ENCODE measurements at regions of chr18 and their contacts with region 1.

Region 1: DNA sequence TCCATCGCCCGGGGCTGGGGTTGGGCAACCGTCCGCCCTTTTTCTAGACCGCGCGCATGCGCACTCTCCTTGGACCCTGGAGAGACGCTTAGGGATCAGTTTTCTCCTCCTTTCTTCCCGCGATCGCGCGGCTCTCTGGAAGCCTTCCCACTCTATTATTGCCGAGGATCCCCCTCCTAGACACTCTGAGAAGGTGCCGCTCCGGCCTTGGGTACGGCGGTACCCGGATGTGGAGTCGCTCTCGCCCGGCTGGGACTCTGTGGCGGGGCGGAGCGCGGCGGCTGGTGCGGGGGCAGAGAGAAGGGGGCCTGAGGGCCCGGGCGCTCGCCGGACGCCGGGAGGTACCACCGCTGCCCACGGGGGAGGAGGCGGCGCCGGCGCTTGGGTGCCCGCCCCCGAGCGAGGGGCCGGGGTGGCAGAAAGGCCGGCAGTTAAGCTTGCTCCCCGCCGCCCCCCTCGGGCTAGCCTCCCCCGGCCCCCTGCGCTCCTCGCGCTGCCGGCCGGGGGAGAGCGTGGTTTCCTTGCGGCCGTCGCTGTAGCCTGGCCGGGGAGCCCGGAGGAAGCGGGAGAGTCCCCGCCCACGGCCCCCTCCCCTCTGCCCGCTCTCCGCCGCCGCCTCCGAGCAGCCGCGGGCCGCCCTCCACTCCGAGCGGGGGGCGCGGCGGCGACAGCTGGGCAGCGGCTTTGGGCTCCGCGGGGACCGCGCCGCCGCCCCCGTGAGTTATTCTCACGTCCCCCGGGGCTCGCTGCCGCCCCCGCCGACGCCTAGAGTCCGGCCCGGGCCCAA is at the start of gene MIB1:
- DNase-seq: peak in 1 of 2 experiments; percentile 18
- ATAC-seq: peak; percentile 91
- H3K4me3 ChIP-seq: peak within 1 kb of the TSS; percentile 92
- H3K27ac ChIP-seq: peak within 1 kb of the TSS; percentile 94 to 100
- H3K4me1 ChIP-seq: peaks cover 8% of the 10 kb centered on the region; the same call in 2 of the 3 replicates
- CTCF ChIP-seq: no peak
- EP300 ChIP-seq: no peak
- POLR2A ChIP-seq: peak; percentile 47
- RAD21 ChIP-seq: no peak
- polyA plus RNA-seq, gene MIB1: 20.3 and 22.2 TPM in 2 replicates

Region 2: DNA sequence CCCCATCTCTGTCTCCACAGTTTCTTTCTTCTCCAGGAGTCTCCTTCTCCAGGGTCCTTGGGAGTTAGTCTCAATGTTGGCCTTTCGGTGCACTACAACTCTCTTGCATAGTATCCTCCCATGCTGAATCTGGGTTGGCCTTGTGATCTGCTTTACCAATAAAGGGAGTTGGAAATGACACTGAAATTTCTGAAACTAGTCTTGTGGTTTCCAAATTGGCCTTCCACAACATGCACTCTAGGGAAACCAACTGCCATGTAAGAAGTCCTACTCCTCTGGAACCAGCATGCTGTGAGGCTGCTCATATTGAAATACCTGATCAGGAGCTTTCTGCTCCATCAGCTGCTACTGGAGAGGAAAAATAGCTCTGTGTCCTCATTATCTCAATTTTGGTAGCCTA is 26.4 kb before region 1 on chr18:
- CTCF ChIA-PET with region 1: no interaction called
- POLR2A ChIA-PET with region 1: interaction called, 10 read pairs
- DNase-seq: no peak
- ATAC-seq: no peak
- H3K4me3 ChIP-seq: no peak overlapping the region
- H3K27ac ChIP-seq: no peak overlapping the region
- H3K4me1 ChIP-seq: no peaks in the 10 kb centered on the region
- CTCF ChIP-seq: no peak
- EP300 ChIP-seq: no peak
- POLR2A ChIP-seq: no peak
- RAD21 ChIP-seq: no peak

Measured in A549 (cell line).